Lower leg skin (tissue), 4 donors: ENCODE measurements at regions of chr1 and their contacts with region 1.

Region 1: DNA sequence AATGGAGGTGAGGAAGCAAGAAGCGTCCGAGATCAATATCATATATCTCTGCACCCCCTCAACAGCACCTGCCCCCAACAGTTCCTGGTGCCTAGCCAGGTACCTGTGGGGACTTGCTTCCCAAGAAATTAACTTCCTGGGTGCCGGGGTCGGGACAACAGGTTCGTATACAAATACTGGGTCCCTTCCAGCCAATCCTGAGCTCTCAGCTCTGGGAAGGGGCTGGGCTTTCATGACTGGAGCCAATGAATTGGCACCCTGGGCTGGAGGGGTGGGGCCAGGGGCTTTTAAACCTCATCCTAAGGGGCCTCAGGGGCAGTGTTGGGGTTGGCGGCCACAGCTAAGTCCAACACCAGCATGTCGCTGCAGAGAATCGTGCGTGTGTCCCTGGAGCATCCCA is at the start of gene PADI3:
- DNase-seq: no peak
- H3K4me3 ChIP-seq: no peak within 1 kb of the TSS
- CTCF ChIP-seq: no peak
- POLR2A ChIP-seq: no peak
- total RNA-seq, gene PADI3: 0.23 to 2.1 TPM in 2 of 4 donors, not detected in the others

Region 2: GRCh38 chr1:16613185-16614147 is 635.3 kb before region 1 on chr1 and contains the start of gene NBPF1:
- intact Hi-C with region 1: no loop called
- DNase-seq: peak; percentile 96 to 100
- H3K4me3 ChIP-seq: peak within 1 kb of the TSS; percentile 74
- CTCF ChIP-seq: peak in 2 of 3 donors; percentile 45 to 92
- POLR2A ChIP-seq: peak in 1 of 2 donors; percentile 79
- total RNA-seq, gene NBPF1: 8.2 to 19.8 (median 14.7) TPM

Region 3: GRCh38 chr1:17236779-17237560 is 11.8 kb before region 1 on chr1:
- intact Hi-C with region 1: no loop called
- DNase-seq: peak; percentile 77 to 97
- H3K4me3 ChIP-seq: no peak overlapping the region
- CTCF ChIP-seq: peak in 1 of 3 donors; percentile 88
- POLR2A ChIP-seq: no peak

Region 4: GRCh38 chr1:17274186-17275170 is 25.7 kb after region 1 on chr1:
- intact Hi-C with region 1: loop called (anchors 1 kb)
- DNase-seq: no peak
- H3K4me3 ChIP-seq: no peak overlapping the region
- CTCF ChIP-seq: no peak
- POLR2A ChIP-seq: no peak

Region 5: DNA sequence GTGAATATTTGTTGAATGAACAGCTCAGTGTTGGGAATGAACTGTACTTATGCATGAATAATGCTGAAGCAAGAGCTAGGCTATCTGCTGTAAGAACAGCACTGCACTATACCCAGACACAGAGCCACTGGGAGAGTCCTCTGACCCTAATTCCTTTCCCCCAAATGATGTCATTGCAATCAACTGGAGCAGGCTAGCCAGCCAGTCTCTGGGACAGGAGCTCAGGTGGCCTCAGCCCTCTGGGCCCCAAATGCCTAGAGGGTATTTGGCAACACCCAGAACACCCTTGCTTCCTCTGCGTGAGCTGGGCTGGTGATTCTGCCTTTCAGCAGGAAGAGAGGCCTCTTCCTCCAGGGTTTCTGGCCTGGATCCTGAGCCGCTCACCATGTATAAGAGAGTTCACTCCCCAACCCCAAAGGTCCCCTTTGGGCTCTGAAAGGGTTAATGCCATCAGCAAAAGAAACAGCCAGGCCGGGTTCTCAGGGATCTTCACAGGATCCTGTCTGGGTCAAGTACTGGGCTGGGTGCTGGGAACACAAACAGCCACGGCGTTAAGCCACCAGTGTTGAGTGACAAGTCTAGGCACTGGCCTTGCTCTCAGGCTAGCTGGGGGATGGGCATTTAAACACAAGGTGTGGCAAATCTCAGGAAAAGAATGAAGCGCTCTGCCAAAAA is 55.5 kb after region 1 on chr1:
- intact Hi-C with region 1: no loop called
- DNase-seq: peak in 1 of 2 donors; percentile 67
- H3K4me3 ChIP-seq: no peak overlapping the region
- CTCF ChIP-seq: no peak
- POLR2A ChIP-seq: no peak